ENCODE measurements at regions of chr11 and their contacts with region 1.

Region 1: GRCh38 chr11:88543902-88544655 is 206.5 kb upstream of the CTSC start:
- DNase-seq: peak; percentile 88
- H3K4me3 Mint-ChIP-seq: no peak overlapping the region
- H3K27ac Mint-ChIP-seq: no peak overlapping the region
- H3K4me1 Mint-ChIP-seq: peaks cover 6% of the 10 kb centered on the region
- H3K27me3 Mint-ChIP-seq: no peaks in the 10 kb centered on the region

Region 2: DNA sequence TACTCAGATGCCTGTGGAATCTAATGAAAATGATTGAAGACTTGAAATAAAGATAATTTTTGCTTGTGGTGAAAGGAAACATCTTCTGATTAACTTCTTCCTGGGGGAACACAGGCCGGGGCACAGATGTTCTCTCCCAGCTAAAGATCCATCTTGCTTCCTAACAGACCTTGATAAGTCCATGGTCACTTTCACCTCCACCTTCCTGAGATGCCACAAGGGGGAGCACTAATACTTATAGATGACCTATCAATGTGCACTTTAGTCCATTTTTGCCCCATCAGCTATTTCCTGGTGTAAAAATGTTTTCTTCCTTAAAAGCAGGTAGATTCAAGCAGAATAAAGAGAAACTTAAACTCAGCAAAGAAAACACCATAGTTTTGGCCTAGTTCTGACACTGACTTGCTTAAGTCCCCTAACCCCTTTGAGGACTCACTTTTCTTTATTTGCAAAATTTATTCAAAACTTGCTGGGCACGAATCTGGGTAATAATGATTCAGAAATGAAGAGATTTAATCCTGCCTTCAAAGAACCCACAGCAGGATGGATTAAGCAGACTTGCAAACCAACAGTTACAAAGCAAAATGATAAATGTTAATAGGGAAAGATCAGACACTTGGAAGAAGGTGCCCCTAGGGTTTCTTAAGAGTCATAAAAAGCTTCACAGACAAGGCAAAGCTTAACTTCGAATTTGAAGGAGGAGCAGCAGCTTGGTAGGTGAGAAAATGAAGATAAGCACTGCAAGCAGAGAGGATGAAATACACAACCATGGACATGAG is 527.5 kb before region 1 on chr11:
- CTCF ChIA-PET with region 1: interaction called, 43 read pairs
- DNase-seq: peak; percentile 71
- H3K4me3 Mint-ChIP-seq: no peak overlapping the region
- H3K27ac Mint-ChIP-seq: no peak overlapping the region
- H3K4me1 Mint-ChIP-seq: no peaks in the 10 kb centered on the region
- H3K27me3 Mint-ChIP-seq: no peaks in the 10 kb centered on the region

Region 3: DNA sequence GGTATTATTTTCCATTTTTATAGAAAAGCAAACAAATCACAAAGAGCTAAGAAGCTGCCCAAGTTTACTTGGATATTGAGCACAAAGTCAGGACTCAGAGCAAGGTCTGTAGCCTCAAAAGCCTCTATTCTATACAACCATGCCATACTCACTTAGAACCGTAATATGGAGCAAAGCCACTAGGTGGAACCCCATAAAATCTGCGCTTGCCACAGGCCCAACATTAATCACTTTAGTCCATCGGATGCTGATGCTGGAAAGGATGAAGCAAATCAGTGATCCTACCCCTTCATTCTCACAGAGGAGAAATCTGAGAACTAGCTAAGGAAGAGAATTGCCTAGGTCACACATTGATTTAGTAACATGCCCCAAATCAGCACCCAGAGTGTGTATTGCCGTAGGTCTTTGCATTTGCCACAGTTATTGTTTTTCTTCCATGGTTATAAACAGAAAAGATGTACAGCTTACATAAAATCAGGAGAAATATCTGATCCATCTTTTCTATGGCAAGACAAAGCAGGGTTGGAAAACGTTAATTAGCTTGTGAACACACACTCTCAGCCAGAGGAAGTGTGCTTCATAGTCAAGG is 312.1 kb before region 1 on chr11:
- CTCF ChIA-PET with region 1: interaction called, 36 read pairs
- DNase-seq: peak; percentile 21
- H3K4me3 Mint-ChIP-seq: no peak overlapping the region
- H3K27ac Mint-ChIP-seq: no peak overlapping the region
- H3K4me1 Mint-ChIP-seq: no peaks in the 10 kb centered on the region
- H3K27me3 Mint-ChIP-seq: no peaks in the 10 kb centered on the region